Endothelial cell of umbilical vein (primary cell): ENCODE measurements at regions of chr6 and their contacts with region 1.

Region 1: DNA sequence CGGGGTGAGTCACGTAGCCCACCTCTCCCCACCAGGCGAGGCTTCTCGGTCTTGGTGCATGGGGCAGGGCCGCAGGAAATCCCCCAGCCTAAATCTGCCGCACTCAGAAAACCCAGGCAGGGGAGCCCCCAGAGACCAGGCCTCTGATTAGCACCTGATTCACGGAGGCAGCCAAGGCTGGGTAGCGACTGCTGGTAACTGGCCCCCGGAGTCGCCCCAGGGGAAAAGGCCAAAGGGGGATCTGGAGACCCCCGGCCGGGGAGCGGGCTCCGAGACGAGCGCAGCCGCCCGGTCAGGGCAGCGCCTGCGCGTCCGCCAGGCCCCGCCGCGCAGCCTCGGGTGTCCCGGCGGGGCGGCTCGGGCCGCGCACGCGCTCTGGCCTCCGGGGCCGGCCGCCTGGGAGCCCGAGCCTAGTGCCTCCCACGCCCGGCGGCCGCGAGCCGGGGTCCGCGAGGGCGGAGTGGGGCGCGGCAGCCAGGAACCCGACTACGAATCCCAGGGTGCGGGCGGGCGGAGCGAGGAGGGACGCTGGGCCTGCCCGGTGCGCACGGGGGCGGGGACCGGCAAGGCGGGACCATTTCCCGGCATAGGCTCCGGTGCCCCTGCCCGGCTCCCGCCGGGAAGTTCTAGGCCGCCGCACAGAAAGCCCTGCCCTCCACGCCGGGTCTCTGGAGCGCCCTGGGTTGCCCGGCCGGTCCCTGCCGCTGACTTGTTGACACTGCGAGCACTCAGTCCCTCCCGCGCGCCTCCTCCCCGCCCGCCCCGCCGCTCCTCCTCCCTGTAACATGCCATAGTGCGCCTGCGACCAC is at the start of gene DUSP22:
- DNase-seq: peak; percentile 83
- H3K4me3 ChIP-seq: peak within 1 kb of the TSS; percentile 48 to 73 (median 56)
- H3K27ac ChIP-seq: peak within 1 kb of the TSS; percentile 67
- H3K4me1 ChIP-seq: peaks cover 24% of the 10 kb centered on the region
- H3K27me3 ChIP-seq: no peaks in the 10 kb centered on the region
- CTCF ChIP-seq: no peak
- POLR2A ChIP-seq: peak; percentile 82
- total RNA-seq, gene DUSP22: 32.6 and 33.9 TPM in 2 replicates

Region 2: DNA sequence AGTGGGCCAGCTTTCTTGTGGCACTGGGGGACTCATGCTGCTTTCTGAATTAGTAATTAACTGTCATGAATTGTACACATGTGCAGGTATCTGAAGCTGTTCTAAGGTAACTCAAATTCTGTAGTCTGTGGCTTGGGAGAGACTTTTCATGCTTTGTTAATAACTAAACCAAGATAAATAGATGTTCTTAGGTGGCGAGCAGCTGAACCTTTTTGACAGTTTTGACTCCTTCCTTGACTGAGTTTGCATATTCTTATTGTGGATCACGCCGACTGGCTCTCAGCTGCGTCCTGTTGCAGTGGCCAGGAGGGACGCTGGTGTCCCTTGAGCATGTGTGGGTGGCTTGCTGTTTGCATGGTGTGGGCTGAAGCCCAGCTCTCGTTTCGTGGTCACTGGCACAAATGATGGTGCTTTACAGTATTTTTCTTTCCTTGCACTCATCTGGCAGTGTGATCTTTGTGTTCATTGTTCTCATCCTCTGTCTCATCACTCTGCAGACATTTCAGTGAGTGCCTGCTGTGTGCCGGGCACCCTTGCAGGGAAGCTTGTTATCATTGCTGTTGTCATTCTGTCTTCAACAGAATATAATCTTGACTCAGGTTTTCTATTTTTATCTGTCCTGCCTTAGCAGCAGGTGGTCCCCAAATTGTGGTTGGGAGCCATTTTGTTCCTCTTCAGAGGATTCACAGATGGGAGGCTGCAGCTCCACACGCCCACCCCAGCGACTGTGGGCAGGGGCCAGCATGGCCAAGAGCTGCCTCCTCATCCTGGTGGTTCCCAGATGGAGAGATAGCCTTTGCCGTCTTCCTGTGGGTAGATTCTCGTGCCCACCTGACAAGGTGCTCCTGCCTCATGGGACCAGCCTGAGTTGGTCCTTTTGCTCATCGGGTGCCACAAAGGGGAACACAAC is 40.0 kb after region 1 on chr6:
- CTCF ChIA-PET with region 1: interaction called, 7 read pairs
- POLR2A ChIA-PET with region 1: no interaction called
- dilution Hi-C with region 1: no loop called
- intact Hi-C with region 1: loop called (anchors 1 kb)
- DNase-seq: no peak
- H3K4me3 ChIP-seq: no peak overlapping the region
- H3K27ac ChIP-seq: no peak overlapping the region
- H3K4me1 ChIP-seq: peaks cover 13% of the 10 kb centered on the region
- H3K27me3 ChIP-seq: no peaks in the 10 kb centered on the region
- CTCF ChIP-seq: no peak
- POLR2A ChIP-seq: no peak

Region 3: GRCh38 chr6:358432-358831 is 66.5 kb after region 1 on chr6:
- CTCF ChIA-PET with region 1: no interaction called
- POLR2A ChIA-PET with region 1: no interaction called
- dilution Hi-C with region 1: no loop called
- intact Hi-C with region 1: loop called (anchors 2 kb)
- DNase-seq: no peak
- H3K4me3 ChIP-seq: no peak overlapping the region
- H3K27ac ChIP-seq: no peak overlapping the region
- H3K4me1 ChIP-seq: no peaks in the 10 kb centered on the region
- H3K27me3 ChIP-seq: no peaks in the 10 kb centered on the region
- CTCF ChIP-seq: no peak
- POLR2A ChIP-seq: no peak

Region 4: DNA sequence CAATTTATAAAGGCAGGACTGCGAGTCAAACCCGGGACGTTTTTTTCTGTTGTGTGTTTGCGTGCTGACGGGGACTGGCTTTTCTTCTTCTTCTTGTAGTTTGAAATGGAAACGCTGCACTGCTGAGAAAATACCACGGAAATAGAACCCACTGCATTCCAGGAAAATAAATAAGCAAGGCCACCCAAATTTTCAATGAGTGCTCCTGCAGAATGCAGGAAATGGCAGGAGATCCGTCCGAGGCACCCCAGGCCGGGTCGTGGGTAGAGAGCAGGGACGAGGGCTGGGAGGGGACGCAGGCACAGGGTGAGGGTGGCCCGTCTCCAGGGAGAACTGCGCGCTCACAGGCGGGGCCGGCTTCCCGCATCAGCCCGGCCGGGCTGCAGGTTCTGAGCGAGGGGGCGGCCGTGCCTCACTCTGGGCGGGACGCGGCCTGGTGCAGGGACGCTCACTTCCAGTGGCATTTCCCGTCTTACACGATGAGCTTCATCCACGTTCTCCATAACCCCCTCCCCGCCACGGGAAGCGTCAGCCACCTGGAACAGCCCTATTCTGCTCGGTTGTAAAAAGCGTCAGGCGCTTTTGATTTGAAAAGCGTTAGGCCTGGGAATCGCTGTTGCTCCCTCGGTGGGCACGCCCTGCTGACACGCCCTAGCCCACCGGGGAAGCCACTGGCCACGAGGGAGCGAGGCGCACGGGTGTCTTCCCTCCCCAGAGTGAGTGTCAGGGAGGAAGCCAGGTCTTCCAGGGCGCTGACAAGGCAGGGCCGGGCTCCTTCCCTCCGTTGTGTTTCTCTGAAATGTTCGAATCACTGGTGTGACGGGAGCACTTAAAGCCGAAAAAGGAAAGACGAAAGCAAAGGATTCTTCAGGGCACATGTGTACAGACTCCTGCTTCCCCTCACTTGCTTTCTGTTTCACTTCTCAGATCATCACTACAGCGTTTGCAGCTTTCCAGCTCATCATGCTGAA is 419.0 kb after region 1 on chr6:
- CTCF ChIA-PET with region 1: no interaction called
- POLR2A ChIA-PET with region 1: no interaction called
- dilution Hi-C with region 1: no loop called
- intact Hi-C with region 1: loop called (anchors 5 kb)
- DNase-seq: peak; percentile 70
- H3K4me3 ChIP-seq: peak overlapping the region; percentile 20 to 43 (median 42)
- H3K27ac ChIP-seq: peak overlapping the region; percentile 88
- H3K4me1 ChIP-seq: peaks cover 79% of the 10 kb centered on the region
- H3K27me3 ChIP-seq: no peaks in the 10 kb centered on the region
- CTCF ChIP-seq: no peak
- POLR2A ChIP-seq: peak; percentile 48